Activated naive CD4-positive, alpha-beta T cell treated with anti-CD3 and anti-CD28 coated beads for 36 hours (primary cell): ENCODE measurements at regions of chr2 and their contacts with region 1.

Region 1: GRCh38 chr2:8408560-8409460 is 273.0 kb upstream of the ID2 start:
- DNase-seq: peak; percentile 83
- H3K4me3 Mint-ChIP-seq: no peak overlapping the region
- H3K27ac Mint-ChIP-seq: peak overlapping the region; percentile 64
- H3K4me1 Mint-ChIP-seq: peaks cover 26% of the 10 kb centered on the region
- H3K27me3 Mint-ChIP-seq: peaks cover 13% of the 10 kb centered on the region

Region 2: DNA sequence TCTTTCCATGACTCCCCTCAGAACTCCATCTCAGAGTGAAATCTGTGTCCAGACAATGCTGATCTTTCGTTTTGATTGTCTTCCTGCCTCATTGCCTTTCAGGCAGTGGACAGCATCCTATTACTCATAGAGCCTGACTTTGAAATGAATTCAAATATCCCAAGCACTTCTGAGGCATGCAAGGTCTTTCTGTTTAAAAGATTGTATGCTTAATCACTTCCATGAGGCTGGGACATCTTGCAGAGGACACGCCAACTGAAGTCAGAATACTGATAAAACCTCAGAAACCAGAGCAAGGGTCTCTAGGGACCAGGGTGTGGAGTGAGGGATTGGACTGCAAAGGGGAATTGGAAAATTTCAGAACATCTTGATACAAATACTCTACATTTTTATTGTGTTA is 563.5 kb before region 1 on chr2:
- CTCF ChIA-PET with region 1: no interaction called
- intact Hi-C with region 1: loop called (anchors 2 kb)
- DNase-seq: no peak
- H3K4me3 Mint-ChIP-seq: no peak overlapping the region
- H3K27ac Mint-ChIP-seq: no peak overlapping the region
- H3K4me1 Mint-ChIP-seq: peaks cover 19% of the 10 kb centered on the region
- H3K27me3 Mint-ChIP-seq: peaks cover 5% of the 10 kb centered on the region

Region 3: DNA sequence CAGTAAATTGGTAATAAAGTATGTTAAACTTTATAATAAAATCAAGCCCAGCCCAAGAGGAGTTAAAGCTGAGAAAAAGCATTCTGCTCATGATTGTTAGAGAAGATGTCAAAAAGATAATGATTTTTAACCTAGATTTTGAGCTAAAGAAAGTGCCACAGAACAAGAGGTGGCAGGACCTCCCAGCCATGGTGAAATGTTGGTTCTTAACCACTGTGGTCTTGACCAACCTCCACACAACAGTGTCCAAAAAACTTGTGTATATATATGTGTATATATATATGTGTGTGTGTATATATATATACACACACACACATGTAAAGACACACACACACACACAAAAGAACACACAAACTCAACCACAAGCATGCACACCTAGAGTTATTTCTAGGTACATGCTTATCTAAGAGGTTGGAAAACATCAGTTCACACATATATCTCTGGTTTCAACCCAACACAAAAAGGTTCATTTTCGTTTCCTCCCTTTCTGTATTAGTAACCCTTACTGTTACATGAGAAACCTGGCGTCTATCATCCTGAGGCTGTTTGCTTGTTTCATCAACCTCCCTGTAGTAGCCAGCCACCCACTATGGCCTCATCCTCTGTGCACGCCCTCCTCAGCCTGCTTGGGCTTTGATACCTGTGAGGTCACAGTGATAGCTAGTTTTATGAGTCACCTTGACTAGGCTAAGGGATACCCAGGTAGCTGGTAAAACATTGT is 358.8 kb before region 1 on chr2:
- CTCF ChIA-PET with region 1: no interaction called
- intact Hi-C with region 1: loop called (anchors 1 kb)
- DNase-seq: peak; percentile 80
- H3K4me3 Mint-ChIP-seq: no peak overlapping the region
- H3K27ac Mint-ChIP-seq: peak overlapping the region; percentile 68
- H3K4me1 Mint-ChIP-seq: peaks cover 18% of the 10 kb centered on the region
- H3K27me3 Mint-ChIP-seq: peaks cover 2% of the 10 kb centered on the region

Region 4: DNA sequence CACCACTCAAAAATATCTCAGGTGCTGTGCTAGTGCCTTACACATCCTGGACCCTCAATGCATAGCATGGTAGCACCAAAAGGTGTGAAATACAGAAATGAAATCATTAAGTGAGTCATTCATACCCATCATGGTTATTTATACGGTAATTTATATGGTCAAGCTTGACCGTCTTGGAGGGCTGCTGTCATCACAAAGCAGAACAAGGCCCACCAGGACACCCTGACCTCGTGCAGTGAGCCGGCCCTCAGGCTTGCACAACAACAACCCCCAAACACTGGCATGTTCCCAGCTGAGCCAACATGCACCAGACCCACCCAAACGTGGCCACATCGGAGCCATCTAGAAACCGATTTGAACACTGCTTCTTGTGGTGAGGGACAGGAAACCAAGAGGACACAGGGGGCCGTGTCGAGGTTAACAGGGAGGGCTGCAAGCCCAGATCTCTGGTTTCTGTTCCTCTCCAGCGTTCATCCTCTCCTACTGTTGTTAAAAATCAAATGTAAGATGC is 105.4 kb before region 1 on chr2:
- CTCF ChIA-PET with region 1: no interaction called
- intact Hi-C with region 1: loop called (anchors 5 kb)
- DNase-seq: peak; percentile 69
- H3K4me3 Mint-ChIP-seq: no peak overlapping the region
- H3K27ac Mint-ChIP-seq: no peak overlapping the region
- H3K4me1 Mint-ChIP-seq: peaks cover 39% of the 10 kb centered on the region
- H3K27me3 Mint-ChIP-seq: peaks cover 5% of the 10 kb centered on the region

Region 5: GRCh38 chr2:8477552-8478470 is 69.0 kb after region 1 on chr2:
- CTCF ChIA-PET with region 1: interaction called, 3 read pairs
- intact Hi-C with region 1: loop called (anchors 1 kb)
- DNase-seq: peak; percentile 54
- H3K4me3 Mint-ChIP-seq: no peak overlapping the region
- H3K27ac Mint-ChIP-seq: peak overlapping the region; percentile 31
- H3K4me1 Mint-ChIP-seq: peaks cover 65% of the 10 kb centered on the region
- H3K27me3 Mint-ChIP-seq: no peaks in the 10 kb centered on the region

Region 6: GRCh38 chr2:8500124-8501058 is 91.6 kb after region 1 on chr2:
- CTCF ChIA-PET with region 1: no interaction called
- intact Hi-C with region 1: no loop called
- DNase-seq: no peak
- H3K4me3 Mint-ChIP-seq: no peak overlapping the region
- H3K27ac Mint-ChIP-seq: no peak overlapping the region
- H3K4me1 Mint-ChIP-seq: no peaks in the 10 kb centered on the region
- H3K27me3 Mint-ChIP-seq: no peaks in the 10 kb centered on the region

Region 7: GRCh38 chr2:8803658-8804379 is 395.0 kb after region 1 on chr2:
- CTCF ChIA-PET with region 1: no interaction called
- intact Hi-C with region 1: loop called (anchors 5 kb)
- DNase-seq: peak; percentile 78
- H3K4me3 Mint-ChIP-seq: no peak overlapping the region
- H3K27ac Mint-ChIP-seq: peak overlapping the region; percentile 75
- H3K4me1 Mint-ChIP-seq: peaks cover 19% of the 10 kb centered on the region
- H3K27me3 Mint-ChIP-seq: no peaks in the 10 kb centered on the region